Heart left ventricle (tissue), 16 donors: ENCODE measurements at regions of chr10 and their contacts with region 1.

Region 1: GRCh38 chr10:75772153-75772887 is 340.9 kb downstream of the LRMDA start:
- DNase-seq: no peak
- ATAC-seq: peak in 1 of 4 donors; percentile 18
- H3K4me3 ChIP-seq: peak overlapping the region in 10 of 12 donors; percentile 15 to 50 (median 36)
- H3K27ac ChIP-seq: peak overlapping the region; percentile 32 to 80 (median 50)
- H3K4me1 ChIP-seq: peaks cover 0 to 46% (median 16%) of the 10 kb centered on the region in 12 donors
- H3K27me3 ChIP-seq: no peaks in the 10 kb centered on the region
- CTCF ChIP-seq: no peak
- POLR2A ChIP-seq: no peak

Region 2: GRCh38 chr10:75651417-75651816 is 120.9 kb before region 1 on chr10:
- intact Hi-C with region 1: loop called in 1 of 10 experiments (anchors 10 kb)
- DNase-seq: no peak
- ATAC-seq: no peak
- H3K4me3 ChIP-seq: no peak overlapping the region
- H3K27ac ChIP-seq: no peak overlapping the region
- H3K4me1 ChIP-seq: peaks cover 0 to 50% (median 26%) of the 10 kb centered on the region in 12 donors
- H3K27me3 ChIP-seq: no peaks in the 10 kb centered on the region
- CTCF ChIP-seq: peak in 2 of 12 donors; percentile 22 to 23
- POLR2A ChIP-seq: no peak

Region 3: DNA sequence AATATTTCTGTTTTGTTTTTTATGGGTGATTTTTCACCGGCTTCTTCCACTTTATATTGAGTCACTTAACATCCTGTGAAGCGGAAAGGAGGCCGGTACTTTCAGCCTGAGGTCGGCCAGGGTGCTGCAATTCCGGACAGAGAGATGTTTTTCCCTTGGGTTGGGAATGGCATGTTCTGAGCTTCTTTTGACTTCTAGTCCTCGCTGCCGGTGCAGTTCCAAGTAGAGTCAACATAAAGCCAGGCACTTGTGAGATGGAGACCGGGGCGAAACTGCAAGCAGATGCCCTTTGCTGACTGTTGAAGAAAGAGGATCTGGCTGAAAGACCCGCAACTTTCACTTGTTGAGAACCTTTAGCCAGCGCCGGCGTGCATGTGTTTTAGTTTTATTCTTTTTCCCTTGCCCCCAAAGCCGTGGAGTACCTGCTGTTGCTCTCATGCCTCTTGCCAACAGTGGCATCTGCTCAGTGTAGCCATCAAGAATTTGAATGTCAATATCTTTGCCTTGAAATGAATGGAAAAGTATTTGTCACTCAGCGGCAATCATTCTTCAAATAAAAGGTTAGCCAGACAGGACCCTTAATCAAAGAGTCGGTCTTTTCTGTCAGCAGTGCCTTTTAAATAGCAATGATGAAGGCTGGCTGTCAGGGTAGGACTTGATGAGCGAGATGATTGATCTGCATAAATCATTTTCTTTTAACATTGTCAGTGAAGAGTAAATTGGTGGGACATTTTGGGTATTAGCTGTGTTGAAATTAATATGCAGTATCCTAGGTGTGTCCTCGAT is 10.3 kb after region 1 on chr10:
- intact Hi-C with region 1: loop called in 1 of 10 experiments (anchors 1 kb)
- DNase-seq: no peak
- ATAC-seq: peak in 1 of 4 donors; percentile 45
- H3K4me3 ChIP-seq: no peak overlapping the region
- H3K27ac ChIP-seq: no peak overlapping the region
- H3K4me1 ChIP-seq: peaks cover 0 to 18% (median 6%) of the 10 kb centered on the region in 12 donors
- H3K27me3 ChIP-seq: no peaks in the 10 kb centered on the region
- CTCF ChIP-seq: no peak
- POLR2A ChIP-seq: no peak